HEK293T (cell line): ENCODE measurements at regions of chr2 and their contacts with region 1.

Region 1: GRCh38 chr2:187581125-187581896 is 27.1 kb upstream of the TFPI start:
- DNase-seq: peak; percentile 18

Region 2: GRCh38 chr2:187499941-187500532 is 81.3 kb before region 1 on chr2:
- CTCF ChIA-PET with region 1: interaction called, 88 read pairs
- POLR2A ChIA-PET with region 1: no interaction called
- DNase-seq: peak; percentile 44